ENCODE measurements at regions of chr2 and their contacts with region 1.

Region 1: DNA sequence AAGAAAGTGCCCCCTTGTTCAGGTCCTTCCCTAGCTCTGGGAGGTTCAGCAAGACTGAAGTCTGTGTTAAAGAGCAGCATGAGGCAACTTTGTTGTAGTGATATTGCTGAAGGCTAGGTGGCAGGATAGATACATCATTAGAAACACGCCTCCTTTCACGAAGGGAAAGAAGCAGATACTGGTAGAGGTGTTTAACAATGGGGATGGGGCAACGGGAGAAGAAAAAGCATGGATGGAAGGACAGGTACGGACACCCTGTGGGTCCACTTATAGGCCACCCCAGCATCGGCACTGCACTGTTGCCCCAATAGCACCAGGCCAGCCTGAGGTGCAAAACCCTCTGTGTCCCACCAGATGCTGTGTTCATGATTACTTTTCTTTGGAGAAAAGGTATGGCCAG is 3.5 kb upstream of the IGFBP5 start:
- DNase-seq: peak in 5 of 9 donors; percentile 19 to 40 (median 26)
- ATAC-seq: peak; percentile 40
- H3K4me3 ChIP-seq: no peak overlapping the region
- H3K4me3 Mint-ChIP-seq: no peak overlapping the region
- H3K27ac ChIP-seq: no peak overlapping the region
- H3K27ac Mint-ChIP-seq: no peak overlapping the region
- H3K4me1 ChIP-seq: peaks cover 0 to 7% of the 10 kb centered on the region in 2 donors
- H3K4me1 Mint-ChIP-seq: peaks cover 0 to 21% (median 12%) of the 10 kb centered on the region in 7 donors
- H3K27me3 ChIP-seq: peaks cover 3 to 4% of the 10 kb centered on the region in 2 donors
- H3K27me3 Mint-ChIP-seq: peaks cover 5 to 37% (median 30%) of the 10 kb centered on the region in 5 donors

Region 2: GRCh38 chr2:216679221-216680019 is 19.5 kb before region 1 on chr2:
- CTCF ChIA-PET with region 1: no interaction called
- POLR2A ChIA-PET with region 1: no interaction called
- intact Hi-C with region 1: no loop called
- DNase-seq: no peak
- ATAC-seq: no peak
- H3K4me3 ChIP-seq: no peak overlapping the region
- H3K4me3 Mint-ChIP-seq: no peak overlapping the region
- H3K27ac ChIP-seq: no peak overlapping the region
- H3K27ac Mint-ChIP-seq: peak overlapping the region in 2 of 9 donors; percentile 27 to 81
- H3K4me1 ChIP-seq: no peaks in the 10 kb centered on the region
- H3K4me1 Mint-ChIP-seq: peaks cover 0 to 13% (median 0%) of the 10 kb centered on the region in 7 donors
- H3K27me3 ChIP-seq: no peaks in the 10 kb centered on the region
- H3K27me3 Mint-ChIP-seq: peaks cover 11 to 24% (median 14%) of the 10 kb centered on the region in 5 donors

Region 3: DNA sequence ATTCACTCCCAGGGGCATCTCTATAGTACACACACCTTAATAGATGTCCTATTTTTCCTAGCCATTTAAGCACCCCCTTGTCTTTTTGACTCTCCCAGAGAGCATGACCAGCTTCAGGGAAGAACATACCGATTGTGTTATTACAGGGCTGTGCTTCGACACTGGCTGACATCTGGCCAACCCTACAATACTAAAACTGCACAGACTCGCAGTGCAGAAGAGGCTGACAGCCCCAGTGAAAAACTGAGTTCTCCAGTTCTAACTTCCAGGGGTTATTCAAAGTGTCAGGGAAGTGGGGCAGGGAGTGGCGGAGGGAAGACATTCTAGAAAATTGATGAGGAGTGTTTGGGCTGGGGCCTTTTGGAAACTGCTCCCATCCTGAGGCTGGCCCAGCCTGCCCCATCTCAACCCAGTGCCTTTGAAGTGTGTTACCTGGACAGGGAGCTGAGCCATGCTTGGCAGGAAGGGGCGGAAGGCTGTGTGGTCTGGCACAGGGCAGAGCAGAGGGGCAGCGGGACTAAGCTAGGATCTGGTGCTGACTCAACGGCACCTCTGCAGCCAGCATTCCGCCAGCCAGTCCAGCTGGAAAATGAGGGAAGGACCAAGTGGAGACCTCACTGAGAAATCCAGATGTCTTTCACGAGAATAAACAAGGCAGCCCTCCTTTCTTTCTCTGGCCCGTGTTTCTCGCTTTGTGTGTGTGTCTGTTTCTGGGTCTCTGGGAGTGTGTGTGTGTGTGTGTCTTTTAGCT is 11.8 kb after region 1 on chr2:
- CTCF ChIA-PET with region 1: no interaction called
- POLR2A ChIA-PET with region 1: no interaction called
- intact Hi-C with region 1: loop called in 1 of 2 experiments (anchors 1 kb)
- DNase-seq: no peak
- ATAC-seq: no peak
- H3K4me3 ChIP-seq: no peak overlapping the region
- H3K4me3 Mint-ChIP-seq: no peak overlapping the region
- H3K27ac ChIP-seq: no peak overlapping the region
- H3K27ac Mint-ChIP-seq: peak overlapping the region in 1 of 9 donors; percentile 23
- H3K4me1 ChIP-seq: no peaks in the 10 kb centered on the region
- H3K4me1 Mint-ChIP-seq: no peaks in the 10 kb centered on the region
- H3K27me3 ChIP-seq: no peaks in the 10 kb centered on the region
- H3K27me3 Mint-ChIP-seq: peaks cover 0 to 11% (median 4%) of the 10 kb centered on the region in 5 donors

Region 4: GRCh38 chr2:217142649-217143266 is 443.9 kb after region 1 on chr2:
- CTCF ChIA-PET with region 1: no interaction called
- POLR2A ChIA-PET with region 1: no interaction called
- intact Hi-C with region 1: loop called in 1 of 2 experiments (anchors 1 kb)
- DNase-seq: peak in 1 of 9 donors; percentile 27
- ATAC-seq: no peak
- H3K4me3 ChIP-seq: no peak overlapping the region
- H3K4me3 Mint-ChIP-seq: no peak overlapping the region
- H3K27ac ChIP-seq: no peak overlapping the region
- H3K27ac Mint-ChIP-seq: no peak overlapping the region
- H3K4me1 ChIP-seq: no peaks in the 10 kb centered on the region
- H3K4me1 Mint-ChIP-seq: no peaks in the 10 kb centered on the region
- H3K27me3 ChIP-seq: no peaks in the 10 kb centered on the region
- H3K27me3 Mint-ChIP-seq: peaks cover 0 to 29% (median 14%) of the 10 kb centered on the region in 5 donors

Region 5: DNA sequence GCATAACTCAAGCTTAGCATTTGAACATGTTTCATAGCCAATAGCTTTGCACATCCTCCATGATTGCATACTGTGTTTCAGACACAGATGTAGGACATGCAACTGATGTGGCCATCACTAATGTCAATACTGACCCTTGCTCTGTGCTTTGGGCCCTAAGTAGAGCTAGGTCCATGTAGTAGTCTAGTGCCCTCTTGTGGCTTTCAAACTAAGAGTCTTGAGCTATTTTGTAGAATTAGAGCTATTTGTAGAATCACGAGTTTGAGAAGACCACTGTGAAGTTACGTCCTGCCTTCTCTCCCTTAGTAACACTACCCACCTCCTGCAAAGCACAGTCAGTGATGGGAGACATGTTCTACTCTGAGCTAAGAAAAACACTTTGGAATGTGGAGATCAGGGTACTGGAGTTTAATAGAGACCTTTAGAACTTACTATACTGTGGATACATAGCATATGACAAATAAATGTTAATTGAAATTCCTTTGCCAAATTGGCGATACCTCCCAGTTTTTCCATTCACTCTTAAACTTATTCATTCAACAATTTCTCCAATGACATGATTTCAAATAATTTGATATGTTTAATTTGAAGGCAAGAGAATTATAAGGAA is 467.5 kb after region 1 on chr2:
- CTCF ChIA-PET with region 1: no interaction called
- POLR2A ChIA-PET with region 1: no interaction called
- intact Hi-C with region 1: loop called in 1 of 2 experiments (anchors 1 kb)
- DNase-seq: no peak
- ATAC-seq: no peak
- H3K4me3 ChIP-seq: no peak overlapping the region
- H3K4me3 Mint-ChIP-seq: no peak overlapping the region
- H3K27ac ChIP-seq: no peak overlapping the region
- H3K27ac Mint-ChIP-seq: no peak overlapping the region
- H3K4me1 ChIP-seq: no peaks in the 10 kb centered on the region
- H3K4me1 Mint-ChIP-seq: peaks cover 11 to 20% (median 16%) of the 10 kb centered on the region in 7 donors
- H3K27me3 ChIP-seq: no peaks in the 10 kb centered on the region
- H3K27me3 Mint-ChIP-seq: peaks cover 0 to 33% (median 14%) of the 10 kb centered on the region in 5 donors

Region 6: GRCh38 chr2:217223222-217223930 is 524.5 kb after region 1 on chr2:
- CTCF ChIA-PET with region 1: no interaction called
- POLR2A ChIA-PET with region 1: no interaction called
- intact Hi-C with region 1: loop called in 1 of 2 experiments (anchors 10 kb)
- DNase-seq: peak in 1 of 9 donors; percentile 60
- ATAC-seq: peak; percentile 78
- H3K4me3 ChIP-seq: no peak overlapping the region
- H3K4me3 Mint-ChIP-seq: peak overlapping the region in 1 of 10 donors; percentile 64
- H3K27ac ChIP-seq: no peak overlapping the region
- H3K27ac Mint-ChIP-seq: peak overlapping the region in 1 of 9 donors; percentile 88
- H3K4me1 ChIP-seq: no peaks in the 10 kb centered on the region
- H3K4me1 Mint-ChIP-seq: peaks cover 4 to 42% (median 6%) of the 10 kb centered on the region in 7 donors
- H3K27me3 ChIP-seq: no peaks in the 10 kb centered on the region
- H3K27me3 Mint-ChIP-seq: peaks cover 0 to 3% (median 0%) of the 10 kb centered on the region in 5 donors

Region 7: GRCh38 chr2:217510771-217511291 is 811.9 kb after region 1 on chr2:
- CTCF ChIA-PET with region 1: no interaction called
- POLR2A ChIA-PET with region 1: no interaction called
- intact Hi-C with region 1: loop called (anchors 2 to 5 kb)
- DNase-seq: peak in 8 of 9 donors; percentile 11 to 59 (median 40)
- ATAC-seq: peak; percentile 82
- H3K4me3 ChIP-seq: no peak overlapping the region
- H3K4me3 Mint-ChIP-seq: peak overlapping the region in 2 of 10 donors; percentile 14 to 20
- H3K27ac ChIP-seq: no peak overlapping the region
- H3K27ac Mint-ChIP-seq: no peak overlapping the region
- H3K4me1 ChIP-seq: no peaks in the 10 kb centered on the region
- H3K4me1 Mint-ChIP-seq: peaks cover 0 to 13% (median 7%) of the 10 kb centered on the region in 7 donors
- H3K27me3 ChIP-seq: no peaks in the 10 kb centered on the region
- H3K27me3 Mint-ChIP-seq: peaks cover 4 to 19% (median 7%) of the 10 kb centered on the region in 5 donors

Region 8: DNA sequence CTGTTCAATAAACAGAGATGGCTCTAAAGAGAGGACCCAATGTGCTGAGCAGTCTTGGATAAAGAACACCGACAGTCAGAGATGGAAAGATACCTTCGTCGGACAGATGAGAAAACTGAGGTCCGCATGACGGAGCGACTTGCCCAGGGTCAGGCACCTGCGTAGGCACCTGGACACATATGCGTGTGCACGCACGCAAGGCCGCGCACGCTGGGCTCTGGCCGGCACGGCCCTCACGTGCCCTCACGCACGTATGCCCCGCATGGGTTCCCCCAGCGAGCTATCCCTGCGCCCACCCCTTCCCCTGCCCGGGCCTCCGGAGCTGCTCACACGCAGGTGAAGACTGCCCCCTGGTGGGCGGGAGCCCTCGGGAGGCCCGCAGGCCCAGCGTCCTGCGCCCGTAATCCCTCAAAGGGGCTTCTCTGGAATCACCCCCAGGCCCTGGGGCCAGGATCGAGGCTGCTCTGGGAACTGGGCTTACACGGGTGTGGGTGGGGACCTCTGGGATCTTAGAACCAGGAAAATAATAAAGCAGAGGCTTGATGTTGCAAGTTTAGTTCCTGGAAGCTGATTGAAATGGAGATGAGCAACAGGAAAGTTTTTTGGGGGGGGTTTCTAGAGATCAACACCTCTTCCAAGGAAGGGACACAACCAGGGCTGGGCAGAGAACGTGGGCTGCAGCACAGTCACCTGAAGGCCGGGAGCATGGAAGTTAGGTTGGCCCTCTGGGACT is 1057.6 kb after region 1 on chr2:
- CTCF ChIA-PET with region 1: interaction called, 3 read pairs
- POLR2A ChIA-PET with region 1: no interaction called
- intact Hi-C with region 1: loop called (anchors 1 to 5 kb)
- DNase-seq: peak; percentile 48 to 76 (median 69)
- ATAC-seq: peak; percentile 91
- H3K4me3 ChIP-seq: peak overlapping the region; percentile 51
- H3K4me3 Mint-ChIP-seq: peak overlapping the region; percentile 9 to 73 (median 62)
- H3K27ac ChIP-seq: no peak overlapping the region
- H3K27ac Mint-ChIP-seq: peak overlapping the region in 1 of 9 donors; percentile 51
- H3K4me1 ChIP-seq: peaks cover 0 to 26% of the 10 kb centered on the region in 2 donors
- H3K4me1 Mint-ChIP-seq: peaks cover 18 to 36% (median 25%) of the 10 kb centered on the region in 7 donors
- H3K27me3 ChIP-seq: no peaks in the 10 kb centered on the region
- H3K27me3 Mint-ChIP-seq: peaks cover 0 to 11% (median 0%) of the 10 kb centered on the region in 5 donors

Measured in naive thymus-derived CD4-positive, alpha-beta T cell (primary cell).